Spleen (tissue), 13 donors: ENCODE measurements at regions of chrX and their contacts with region 1.

Region 1: GRCh38 chrX:76454456-76454927 is 27.0 kb downstream of the MAGEE1 start:
- DNase-seq: peak; percentile 24
- H3K4me3 ChIP-seq: no peak overlapping the region
- H3K27ac ChIP-seq: no peak overlapping the region
- H3K4me1 ChIP-seq: no peaks in the 10 kb centered on the region
- H3K27me3 ChIP-seq: no peaks in the 10 kb centered on the region
- CTCF ChIP-seq: peak in 9 of 11 experiments; percentile 18 to 61 (median 50)
- POLR2A ChIP-seq: no peak

Region 2: GRCh38 chrX:76279000-76279399 is 175.5 kb before region 1 on chrX:
- intact Hi-C with region 1: loop called (anchors 10 kb)
- DNase-seq: no peak
- H3K4me3 ChIP-seq: no peak overlapping the region
- H3K27ac ChIP-seq: no peak overlapping the region
- H3K4me1 ChIP-seq: no peaks in the 10 kb centered on the region
- H3K27me3 ChIP-seq: no peaks in the 10 kb centered on the region
- CTCF ChIP-seq: peak; percentile 8 to 61 (median 50)
- POLR2A ChIP-seq: no peak

Region 3: DNA sequence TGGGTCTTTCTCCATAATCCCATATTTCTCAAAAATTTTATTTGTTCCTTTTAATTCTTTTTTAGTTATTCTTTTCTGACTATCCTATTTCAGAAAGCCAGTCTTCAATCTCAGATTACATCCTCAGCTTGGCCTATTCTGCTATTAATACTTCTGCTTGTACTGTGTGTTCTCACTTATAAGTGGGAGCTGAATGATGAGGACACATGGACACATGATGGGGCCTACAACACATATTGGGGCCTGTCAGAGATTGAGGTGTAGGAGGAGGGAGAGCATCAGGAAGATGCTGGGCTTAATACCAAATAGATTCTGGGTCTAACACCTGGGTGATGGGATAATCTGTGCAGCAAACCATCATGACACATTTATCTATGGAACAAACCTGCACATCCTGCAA is 55.3 kb after region 1 on chrX:
- intact Hi-C with region 1: no loop called
- DNase-seq: no peak
- H3K4me3 ChIP-seq: no peak overlapping the region
- H3K27ac ChIP-seq: no peak overlapping the region
- H3K4me1 ChIP-seq: no peaks in the 10 kb centered on the region
- H3K27me3 ChIP-seq: no peaks in the 10 kb centered on the region
- CTCF ChIP-seq: no peak
- POLR2A ChIP-seq: no peak

Region 4: GRCh38 chrX:77693594-77693993 is 1239.1 kb after region 1 on chrX:
- intact Hi-C with region 1: no loop called
- DNase-seq: no peak
- H3K4me3 ChIP-seq: no peak overlapping the region
- H3K27ac ChIP-seq: peak overlapping the region in 1 of 8 donors; percentile 23
- H3K4me1 ChIP-seq: peaks cover 0 to 9% (median 0%) of the 10 kb centered on the region in 6 donors
- H3K27me3 ChIP-seq: no peaks in the 10 kb centered on the region
- CTCF ChIP-seq: no peak
- POLR2A ChIP-seq: no peak